Dorsolateral prefrontal cortex (tissue), 120 donors: ENCODE measurements at regions of chr6 and their contacts with region 1.

Region 1: DNA sequence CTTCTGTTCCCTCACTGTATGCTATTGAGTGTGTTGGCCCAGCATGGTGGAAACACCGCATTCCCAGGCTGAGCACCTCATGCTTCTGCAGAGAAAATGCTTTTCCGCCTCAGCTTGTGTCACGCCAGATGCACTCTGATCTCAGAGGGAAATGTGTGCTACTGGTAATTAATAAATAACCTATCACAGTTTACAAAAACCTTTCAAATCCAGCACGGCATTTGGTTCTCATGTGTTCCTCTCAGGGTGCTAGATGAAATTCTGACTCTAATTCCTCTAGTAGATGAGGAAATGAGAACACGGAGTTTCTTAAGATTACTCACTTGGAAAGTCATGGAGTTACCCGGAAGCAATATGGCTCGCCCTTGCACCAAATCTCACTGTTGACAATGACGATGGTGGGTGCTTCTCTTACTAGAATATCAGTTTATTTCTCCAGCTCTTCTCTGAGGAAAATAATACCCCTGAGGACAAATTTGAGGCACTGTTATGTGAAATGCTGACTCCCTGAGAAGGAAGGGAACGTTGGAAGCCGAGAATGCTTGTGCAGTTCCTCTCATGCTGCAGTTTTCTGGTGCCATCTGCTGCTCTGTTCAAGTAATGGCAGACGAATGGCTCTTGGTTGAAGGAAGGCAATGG is 116.6 kb downstream of the RNF144B start:
- DNase-seq: peak in 9 of 10 donors; percentile 30 to 73 (median 60)
- H3K4me3 ChIP-seq: peak overlapping the region in 57 of 59 donors; percentile 1 to 62 (median 40)
- H3K27ac ChIP-seq: peak overlapping the region in 23 of 59 donors; percentile 4 to 70 (median 38)
- H3K27me3 ChIP-seq: no peaks in the 10 kb centered on the region
- CTCF ChIP-seq: peak; percentile 62 to 99 (median 88)

Region 2: GRCh38 chr6:17156112-17156921 is 1347.4 kb before region 1 on chr6:
- intact Hi-C with region 1: loop called in 1 of 2 experiments (anchors 5 kb)
- DNase-seq: peak in 7 of 10 donors; percentile 63 to 91 (median 69)
- H3K4me3 ChIP-seq: no peak overlapping the region
- H3K27ac ChIP-seq: no peak overlapping the region
- H3K27me3 ChIP-seq: no peaks in the 10 kb centered on the region
- CTCF ChIP-seq: peak; percentile 72 to 98 (median 90)

Region 3: DNA sequence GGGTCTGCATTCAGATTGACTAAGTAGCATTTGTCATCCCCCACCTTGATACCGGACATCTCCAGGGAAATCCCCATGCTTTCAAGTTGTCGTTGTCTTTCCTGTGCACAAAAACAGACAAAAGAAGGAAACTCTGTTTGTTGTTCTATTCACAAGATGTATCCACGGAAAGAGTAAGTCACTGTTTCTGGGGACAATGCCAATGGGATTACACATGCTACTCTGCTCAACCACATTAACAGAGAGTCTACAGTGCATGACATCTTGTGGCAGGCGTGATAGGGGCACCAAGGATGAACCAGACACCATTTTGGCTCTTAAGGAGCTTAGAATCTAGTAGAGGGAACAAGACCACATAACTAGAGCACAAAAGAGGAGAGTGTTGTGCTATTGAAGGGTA is 672.6 kb before region 1 on chr6:
- intact Hi-C with region 1: loop called in 1 of 2 experiments (anchors 5 kb)
- DNase-seq: peak in 1 of 10 donors; percentile 14
- H3K4me3 ChIP-seq: peak overlapping the region in 1 of 59 donors; percentile 3
- H3K27ac ChIP-seq: peak overlapping the region in 57 of 59 donors; percentile 13 to 88 (median 75)
- H3K27me3 ChIP-seq: no peaks in the 10 kb centered on the region
- CTCF ChIP-seq: peak in 3 of 56 donors; percentile 5 to 23 (median 15)

Region 4: GRCh38 chr6:18155150-18155863 is 348.4 kb before region 1 on chr6 and contains the start of gene KDM1B:
- intact Hi-C with region 1: loop called in 1 of 2 experiments (anchors 5 kb)
- DNase-seq: peak; percentile 95 to 99 (median 98)
- H3K4me3 ChIP-seq: peak within 1 kb of the TSS; percentile 68 to 99 (median 93)
- H3K27ac ChIP-seq: peak within 1 kb of the TSS in 57 of 59 donors; percentile 52 to 93 (median 87)
- H3K27me3 ChIP-seq: no peaks in the 10 kb centered on the region
- CTCF ChIP-seq: peak in 18 of 56 donors; percentile 1 to 50 (median 20)
- total RNA-seq, gene KDM1B: 13.3 to 38.5 (median 24.4) TPM

Region 5: GRCh38 chr6:18264219-18264922 is 239.3 kb before region 1 on chr6 and contains the start of gene DEK:
- intact Hi-C with region 1: loop called in 1 of 2 experiments (anchors 1 kb)
- DNase-seq: peak; percentile 82 to 89 (median 84)
- H3K4me3 ChIP-seq: peak within 1 kb of the TSS; percentile 50 to 96 (median 88)
- H3K27ac ChIP-seq: peak within 1 kb of the TSS; percentile 33 to 99 (median 93)
- H3K27me3 ChIP-seq: no peaks in the 10 kb centered on the region
- CTCF ChIP-seq: peak; percentile 29 to 85 (median 65)
- total RNA-seq, gene DEK: 37.6 to 70.7 (median 50.7) TPM

Region 6: DNA sequence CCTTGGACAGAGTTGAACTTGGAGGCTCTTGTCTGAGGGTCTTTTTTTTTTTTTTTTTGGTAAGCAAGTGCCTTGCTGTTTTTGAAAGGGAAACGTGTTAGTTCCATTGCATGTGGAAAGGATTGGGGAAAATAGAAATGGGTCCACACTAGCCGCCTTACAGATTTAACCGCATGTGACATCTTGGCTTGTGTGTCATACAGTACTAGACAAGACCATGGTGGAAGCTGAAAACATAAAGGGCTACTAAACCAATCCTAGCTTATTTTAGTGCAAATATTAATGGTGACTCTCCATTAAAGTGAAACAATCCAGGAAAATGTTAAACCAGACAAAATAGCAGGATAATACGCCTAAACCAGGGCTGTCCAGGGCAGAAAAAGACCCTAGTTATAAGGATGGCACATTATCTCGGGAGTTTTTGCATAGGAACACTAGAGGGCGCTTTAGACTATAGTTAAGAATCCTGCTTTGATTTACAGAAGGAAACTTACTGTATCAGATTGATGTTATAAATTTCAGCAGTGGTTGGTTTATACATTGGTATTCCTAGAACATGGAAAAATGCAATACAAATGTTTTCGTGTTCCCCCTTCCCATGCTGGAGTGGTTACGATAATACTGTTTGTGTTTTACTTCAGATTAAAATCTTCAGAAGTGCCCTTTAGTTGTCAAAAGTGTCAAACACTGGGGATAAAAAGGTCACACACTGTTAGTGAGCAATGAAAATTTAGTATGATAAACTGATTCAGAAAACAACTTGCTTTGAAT is 179.6 kb before region 1 on chr6:
- intact Hi-C with region 1: loop called (anchors 2 kb)
- DNase-seq: no peak
- H3K4me3 ChIP-seq: no peak overlapping the region
- H3K27ac ChIP-seq: no peak overlapping the region
- H3K27me3 ChIP-seq: no peaks in the 10 kb centered on the region
- CTCF ChIP-seq: peak; percentile 53 to 92 (median 79)